ENCODE measurements at regions of chr1 and their contacts with region 1.

Region 1: GRCh38 chr1:237386362-237387143 is 344.6 kb downstream of the RYR2 start:
- DNase-seq: no peak
- H3K4me3 ChIP-seq: no peak overlapping the region
- CTCF ChIP-seq: peak; percentile 5

Region 2: DNA sequence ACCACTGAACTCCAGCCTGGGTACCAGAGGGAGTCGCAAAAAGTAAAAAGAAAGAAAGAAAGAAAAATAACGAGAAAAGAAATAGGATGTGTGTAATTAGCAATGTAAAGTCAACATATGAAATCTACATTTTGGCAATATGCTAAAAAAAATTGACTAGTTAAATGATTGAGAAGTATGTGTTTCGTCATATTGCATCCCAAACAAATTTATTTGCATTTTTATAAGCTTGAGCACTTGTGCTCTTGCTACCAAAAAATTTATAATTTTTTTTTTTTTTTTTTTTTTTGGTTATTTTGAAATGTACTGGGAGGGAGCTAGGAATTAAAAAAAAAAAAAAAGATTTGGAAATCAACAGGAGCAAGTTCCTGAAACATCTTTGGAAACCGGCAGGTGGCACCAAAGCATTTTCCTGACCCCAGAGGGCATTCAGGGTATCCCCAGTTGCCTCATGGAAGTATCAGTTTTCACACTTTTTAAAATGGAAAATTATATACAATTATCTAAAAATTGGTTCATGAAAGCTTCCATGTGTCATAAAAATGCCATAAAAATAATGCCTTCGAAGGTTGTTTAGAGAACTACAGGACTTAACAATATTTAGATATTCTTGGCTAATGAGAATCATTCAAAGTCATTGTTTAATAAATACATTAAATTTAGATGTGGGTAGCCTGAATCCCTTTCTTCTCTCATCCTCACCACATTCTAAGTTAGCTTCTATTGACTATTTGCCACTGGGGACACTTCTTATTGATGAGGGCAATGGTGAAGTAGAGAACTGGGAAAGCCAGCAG is 777.4 kb before region 1 on chr1:
- CTCF ChIA-PET with region 1: interaction called, 16 read pairs
- POLR2A ChIA-PET with region 1: no interaction called
- DNase-seq: no peak
- H3K4me3 ChIP-seq: no peak overlapping the region
- CTCF ChIP-seq: peak; percentile 33

Region 3: DNA sequence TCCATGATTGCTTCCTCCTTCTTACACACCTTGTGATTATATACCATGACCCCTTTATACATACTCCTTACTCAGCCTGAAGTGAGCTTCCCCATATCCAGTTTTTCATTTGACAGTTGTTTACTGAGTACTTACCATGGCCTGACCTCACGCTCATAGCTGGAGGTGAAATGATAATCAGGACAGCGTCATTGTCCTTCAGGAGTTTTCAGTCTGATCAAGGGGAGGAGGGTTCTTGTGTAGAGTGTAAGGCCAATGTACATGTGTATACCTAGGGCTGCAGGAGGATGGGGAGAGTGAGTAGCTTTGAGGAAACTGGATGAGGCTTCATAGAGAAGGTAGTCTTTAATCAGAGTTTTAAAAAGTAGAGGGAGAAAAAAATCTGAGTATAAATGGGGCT is 18.8 kb before region 1 on chr1:
- CTCF ChIA-PET with region 1: no interaction called
- POLR2A ChIA-PET with region 1: no interaction called
- DNase-seq: no peak
- H3K4me3 ChIP-seq: no peak overlapping the region
- CTCF ChIP-seq: no peak

Region 4: DNA sequence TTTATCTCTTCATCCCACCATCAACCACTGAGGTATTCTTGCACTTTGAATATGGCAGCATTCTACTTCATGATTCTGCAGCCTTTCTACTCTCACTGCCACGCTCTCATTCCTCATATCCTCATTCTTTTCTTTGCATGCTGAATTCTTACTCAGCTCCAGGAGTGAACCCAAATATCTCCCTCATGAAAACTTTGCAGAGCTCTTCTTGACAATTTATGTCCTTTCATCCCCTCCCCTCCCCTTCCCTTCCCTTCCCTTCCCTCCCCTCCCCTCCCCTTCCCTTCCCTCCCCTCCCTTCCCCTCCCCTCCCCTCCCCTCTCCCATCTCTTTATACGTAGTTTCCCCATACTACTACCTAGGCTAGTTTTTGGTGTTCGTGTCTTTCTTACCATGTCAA is 19.4 kb after region 1 on chr1:
- CTCF ChIA-PET with region 1: no interaction called
- POLR2A ChIA-PET with region 1: no interaction called
- DNase-seq: no peak
- H3K4me3 ChIP-seq: no peak overlapping the region
- CTCF ChIP-seq: no peak

Measured in AG04449 (cell line).